Head of caudate nucleus (tissue), 42 donors: ENCODE measurements at regions of chr18 and their contacts with region 1.

Region 1: DNA sequence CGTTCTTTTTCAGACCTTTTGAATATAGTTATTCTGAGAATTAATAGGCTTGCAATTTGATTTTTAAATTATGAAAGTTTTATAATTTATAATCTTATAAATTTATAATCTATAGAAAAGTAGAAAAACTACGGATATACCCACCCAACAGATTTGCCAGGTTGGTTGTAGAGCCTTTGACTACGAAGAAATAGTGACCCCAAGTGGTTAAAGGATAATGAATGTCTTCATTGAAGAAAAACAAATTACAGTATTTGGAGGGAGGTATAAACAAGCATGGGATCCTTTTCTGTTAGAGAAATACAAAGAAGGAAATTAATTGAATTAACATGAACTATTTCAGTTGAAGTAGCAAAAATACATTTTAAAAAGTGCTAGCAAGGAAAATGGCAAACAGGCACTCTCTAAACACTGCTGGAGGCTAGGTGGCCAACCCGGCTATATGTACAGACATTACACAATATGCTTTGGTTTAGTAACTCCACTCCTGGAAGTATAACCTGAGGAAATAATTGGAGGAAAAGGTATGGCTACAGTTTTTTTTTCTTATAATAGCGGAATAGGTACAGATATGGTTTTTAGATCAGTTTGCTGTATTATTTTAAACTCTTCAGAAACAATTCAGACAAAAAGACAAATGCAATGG is 110.9 kb downstream of the MIB1 start:
- DNase-seq: no peak

Region 2: DNA sequence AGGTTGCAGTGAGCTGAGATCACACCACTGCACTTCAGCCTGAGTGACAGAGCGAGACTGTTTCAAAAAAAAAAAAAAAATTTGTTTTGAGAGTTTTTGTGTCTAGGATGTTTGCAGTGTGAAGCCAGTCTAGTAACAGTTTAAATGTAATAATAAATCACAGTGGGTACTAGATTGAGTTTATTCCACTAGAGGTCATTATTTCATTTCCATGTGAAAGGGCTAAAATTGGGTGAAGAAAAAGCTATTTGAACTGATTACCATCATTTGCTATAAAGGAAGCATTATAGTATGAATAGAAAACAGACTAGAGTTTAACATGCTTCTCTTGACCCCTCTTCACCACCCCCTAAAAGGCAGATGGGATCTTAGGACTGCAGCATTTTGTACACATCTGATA is 219.1 kb before region 1 on chr18:
- intact Hi-C with region 1: loop called (anchors 10 kb)
- DNase-seq: no peak

Region 3: GRCh38 chr18:21693322-21693721 is 158.1 kb before region 1 on chr18:
- intact Hi-C with region 1: no loop called
- DNase-seq: peak in 1 of 42 donors; percentile 16

Region 4: DNA sequence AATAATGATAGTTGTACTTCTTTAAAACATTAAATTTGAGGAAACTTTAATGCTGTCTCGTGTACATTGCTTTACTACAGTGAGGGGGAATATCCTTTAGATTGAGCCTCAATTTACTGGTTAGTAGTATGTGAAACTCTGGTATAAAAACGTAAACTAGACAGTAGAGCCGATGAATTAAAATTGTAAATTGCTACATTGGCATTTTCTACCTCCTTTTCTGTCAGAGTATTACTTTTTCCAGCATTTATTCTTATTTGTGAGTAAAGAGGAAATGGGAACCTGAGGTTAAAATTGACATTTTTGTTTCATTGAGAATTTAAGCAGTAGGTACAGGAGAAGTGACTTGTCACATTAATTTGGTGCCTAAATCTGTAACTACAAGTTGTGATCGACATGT is 17.3 kb after region 1 on chr18:
- intact Hi-C with region 1: loop called (anchors 2 kb)
- DNase-seq: no peak

Region 5: GRCh38 chr18:22108674-22109073 is 257.2 kb after region 1 on chr18:
- intact Hi-C with region 1: no loop called
- DNase-seq: no peak

Region 6: GRCh38 chr18:22282311-22283112 is 431.1 kb after region 1 on chr18:
- intact Hi-C with region 1: no loop called
- DNase-seq: no peak